Activated T-helper 2 cell treated with anti-CD3 and anti-CD28 coated beads, Interferon-gamma antibody, Interleukin-2, Interleukin-4, amounts not matched to agents 10 μg/mL and 5 μg/mL and 100 μg/mL, durations not matched to agents 14 hours and 24 hours and 36 hours (primary cell): ENCODE measurements at regions of chr6 and their contacts with region 1.

Region 1: GRCh38 chr6:42383421-42384205 is 68.1 kb downstream of the TRERF1 start:
- DNase-seq: no peak
- H3K4me3 Mint-ChIP-seq: peak overlapping the region; percentile 51
- H3K27ac Mint-ChIP-seq: peak overlapping the region; percentile 97
- H3K4me1 Mint-ChIP-seq: peaks cover 75% of the 10 kb centered on the region
- H3K27me3 Mint-ChIP-seq: no peaks in the 10 kb centered on the region

Region 2: DNA sequence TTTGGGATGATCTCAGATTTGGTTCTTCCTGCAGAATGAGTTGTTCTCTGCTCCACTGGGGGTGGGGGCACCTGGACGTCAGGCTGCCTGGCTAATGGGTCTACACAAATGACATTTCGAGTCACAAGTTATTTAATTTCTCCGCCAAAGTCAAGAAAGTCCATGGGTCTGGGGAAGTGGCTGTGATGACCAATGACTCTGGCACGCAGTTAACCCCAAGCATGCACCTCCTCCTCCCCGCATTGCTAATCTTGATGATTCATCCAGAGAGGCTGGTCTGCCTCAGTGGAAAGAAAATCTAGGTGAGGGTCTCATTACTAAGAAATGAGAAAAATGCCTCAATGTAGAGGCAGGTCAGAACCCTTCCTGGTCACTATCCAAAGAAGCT is 67.6 kb before region 1 on chr6:
- intact Hi-C with region 1: loop called (anchors 2 kb)
- DNase-seq: no peak
- H3K4me3 Mint-ChIP-seq: no peak overlapping the region
- H3K27ac Mint-ChIP-seq: peak overlapping the region; percentile 90
- H3K4me1 Mint-ChIP-seq: peaks cover 43% of the 10 kb centered on the region
- H3K27me3 Mint-ChIP-seq: no peaks in the 10 kb centered on the region

Region 3: GRCh38 chr6:42352856-42353564 is 30.6 kb before region 1 on chr6:
- intact Hi-C with region 1: loop called (anchors 1 kb)
- DNase-seq: no peak
- H3K4me3 Mint-ChIP-seq: no peak overlapping the region
- H3K27ac Mint-ChIP-seq: no peak overlapping the region
- H3K4me1 Mint-ChIP-seq: peaks cover 14% of the 10 kb centered on the region
- H3K27me3 Mint-ChIP-seq: no peaks in the 10 kb centered on the region

Region 4: GRCh38 chr6:42598300-42598699 is 214.7 kb after region 1 on chr6:
- intact Hi-C with region 1: no loop called
- DNase-seq: no peak
- H3K4me3 Mint-ChIP-seq: no peak overlapping the region
- H3K27ac Mint-ChIP-seq: no peak overlapping the region
- H3K4me1 Mint-ChIP-seq: peaks cover 8% of the 10 kb centered on the region
- H3K27me3 Mint-ChIP-seq: no peaks in the 10 kb centered on the region